Activated CD4-positive, alpha-beta T cell treated with anti-CD3 and anti-CD28 coated beads, Interleukin-2, amount 10 ng/mL, durations not matched to agents 7 days and 5 days (primary cell): ENCODE measurements at regions of chr15 and their contacts with region 1.

Region 1: GRCh38 chr15:40941528-40942336 is 11.5 kb upstream of the CHAC1 start:
- DNase-seq: peak; percentile 73
- H3K4me3 Mint-ChIP-seq: peak overlapping the region; percentile 77
- H3K27ac Mint-ChIP-seq: peak overlapping the region; percentile 41
- H3K4me1 Mint-ChIP-seq: peaks cover 55% of the 10 kb centered on the region
- H3K27me3 Mint-ChIP-seq: no peaks in the 10 kb centered on the region

Region 2: DNA sequence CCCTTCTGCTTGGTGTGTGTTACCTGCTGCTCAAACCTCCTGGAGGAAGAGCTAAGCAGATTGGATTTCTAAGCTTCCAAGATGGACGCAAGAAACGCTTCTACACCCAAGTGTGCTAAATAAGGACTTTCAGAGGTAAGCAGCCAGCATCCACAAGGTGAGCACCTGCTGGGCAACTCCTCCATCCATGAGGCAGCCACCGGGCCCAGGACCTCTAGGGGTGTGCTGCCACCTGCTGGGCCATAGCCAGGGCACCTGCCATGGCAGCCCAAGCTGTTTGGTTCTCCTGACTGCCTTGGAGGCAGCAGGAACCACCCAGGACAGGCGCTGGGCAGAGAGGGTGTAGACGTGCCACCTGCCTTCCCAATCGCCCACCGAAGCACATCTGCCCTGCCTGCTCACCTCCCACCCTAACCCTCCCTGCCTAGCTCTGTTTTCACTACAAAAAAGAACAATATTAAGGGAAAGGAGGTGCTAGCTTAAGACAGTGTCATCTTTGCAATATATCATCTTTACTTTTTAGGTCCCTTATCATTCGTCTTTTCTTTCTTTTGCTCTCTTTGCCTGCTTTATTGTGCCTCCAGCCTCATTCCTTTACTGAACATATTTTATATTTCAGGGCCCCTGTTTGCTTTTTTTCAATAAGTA is 159.0 kb before region 1 on chr15:
- CTCF ChIA-PET with region 1: no interaction called
- POLR2A ChIA-PET with region 1: no interaction called
- DNase-seq: peak; percentile 84
- H3K4me3 Mint-ChIP-seq: no peak overlapping the region
- H3K27ac Mint-ChIP-seq: no peak overlapping the region
- H3K4me1 Mint-ChIP-seq: peaks cover 20% of the 10 kb centered on the region
- H3K27me3 Mint-ChIP-seq: no peaks in the 10 kb centered on the region

Region 3: GRCh38 chr15:40918146-40918798 is 23.5 kb before region 1 on chr15:
- CTCF ChIA-PET with region 1: interaction called, 10 read pairs
- POLR2A ChIA-PET with region 1: no interaction called
- DNase-seq: no peak
- H3K4me3 Mint-ChIP-seq: no peak overlapping the region
- H3K27ac Mint-ChIP-seq: no peak overlapping the region
- H3K4me1 Mint-ChIP-seq: no peaks in the 10 kb centered on the region
- H3K27me3 Mint-ChIP-seq: peaks cover 9% of the 10 kb centered on the region

Region 4: DNA sequence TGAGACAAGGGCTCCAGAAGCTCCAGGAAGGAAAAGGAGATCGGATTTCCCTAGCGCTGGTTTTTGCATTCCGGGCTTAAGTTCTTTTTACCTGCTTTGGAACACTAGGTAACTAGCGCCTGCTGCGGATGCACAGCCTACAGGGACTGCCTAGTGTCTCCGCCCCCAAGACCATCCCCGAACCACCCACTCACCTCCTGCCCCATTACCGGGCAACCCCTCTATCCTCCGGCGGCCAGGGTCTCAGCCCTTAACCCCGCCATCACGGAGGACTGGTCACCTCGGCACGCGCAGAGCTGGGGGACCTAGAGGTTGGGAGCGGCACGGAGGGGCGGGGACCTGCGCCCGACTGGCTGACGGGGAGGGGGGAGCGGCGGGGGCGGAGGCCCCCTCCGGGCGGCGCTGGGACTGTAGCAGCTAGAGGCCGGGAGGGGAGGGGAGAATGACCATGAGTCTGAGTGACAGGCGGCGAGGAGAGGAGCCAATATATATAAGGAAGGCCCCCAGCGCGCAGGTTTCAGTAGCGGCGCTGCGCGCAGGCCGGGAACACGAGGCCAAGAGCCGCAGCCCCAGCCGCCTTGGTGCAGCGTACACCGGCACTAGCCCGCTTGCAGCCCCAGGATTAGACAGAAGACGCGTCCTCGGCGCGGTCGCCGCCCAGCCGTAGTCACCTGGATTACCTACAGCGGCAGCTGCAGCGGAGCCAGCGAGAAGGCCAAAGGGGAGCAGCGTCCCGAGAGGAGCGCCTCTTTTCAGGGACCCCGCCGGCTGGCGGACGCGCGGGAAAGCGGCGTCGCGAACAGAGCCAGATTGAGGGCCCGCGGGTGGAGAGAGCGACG is 12.7 kb before region 1 on chr15 and contains the start of gene DLL4:
- CTCF ChIA-PET with region 1: interaction called, 33 read pairs
- POLR2A ChIA-PET with region 1: no interaction called
- DNase-seq: peak; percentile 51
- H3K4me3 Mint-ChIP-seq: peak within 1 kb of the TSS; percentile 60
- H3K27ac Mint-ChIP-seq: no peak within 1 kb of the TSS
- H3K4me1 Mint-ChIP-seq: peaks cover 46% of the 10 kb centered on the region
- H3K27me3 Mint-ChIP-seq: peaks cover 82% of the 10 kb centered on the region
- total RNA-seq, gene DLL4: not detected

Region 5: DNA sequence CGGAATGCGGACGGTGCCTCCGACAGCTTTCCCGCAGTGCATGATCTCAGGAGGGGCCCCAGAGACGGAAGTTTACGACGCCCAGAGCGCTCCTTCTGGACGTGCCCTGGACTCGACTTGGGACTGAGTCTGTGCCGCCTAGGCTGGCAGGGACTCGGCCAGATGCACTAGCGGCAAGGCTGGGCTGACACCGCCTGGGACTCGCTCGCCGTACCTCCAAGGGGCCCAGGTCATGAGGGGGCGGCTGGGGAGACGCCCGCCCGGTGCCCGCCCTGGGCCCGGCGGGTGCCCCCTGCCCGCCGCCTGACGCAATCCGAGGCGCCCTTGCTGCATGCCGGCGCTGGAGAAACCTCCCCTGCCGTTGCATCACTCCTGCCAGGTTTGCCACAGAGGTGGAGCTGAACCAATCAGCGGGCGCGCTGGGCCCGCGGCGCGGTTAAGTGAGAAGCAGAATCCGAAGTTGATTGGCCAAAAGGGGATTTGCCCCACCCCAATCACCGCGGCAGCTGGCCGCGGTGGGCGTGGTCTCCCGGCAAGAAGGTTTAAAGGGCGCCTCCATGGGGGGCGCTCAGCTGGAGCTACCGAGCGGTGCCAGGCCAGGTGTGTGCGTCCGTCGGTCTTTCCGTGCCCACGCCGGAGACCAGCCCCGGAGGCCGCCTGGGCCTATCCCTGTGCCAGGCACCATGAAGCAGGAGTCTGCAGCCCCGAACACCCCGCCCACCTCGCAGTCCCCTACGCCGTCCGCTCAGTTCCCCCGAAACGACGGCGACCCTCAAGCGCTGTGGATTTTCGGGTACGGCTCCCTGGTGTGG is 11.4 kb after region 1 on chr15 and contains the start of gene CHAC1:
- CTCF ChIA-PET with region 1: interaction called, 59 read pairs
- POLR2A ChIA-PET with region 1: interaction called, 4 read pairs
- DNase-seq: peak; percentile 98
- H3K4me3 Mint-ChIP-seq: peak within 1 kb of the TSS; percentile 94
- H3K27ac Mint-ChIP-seq: peak within 1 kb of the TSS; percentile 94
- H3K4me1 Mint-ChIP-seq: peaks cover 39% of the 10 kb centered on the region
- H3K27me3 Mint-ChIP-seq: no peaks in the 10 kb centered on the region
- total RNA-seq, gene CHAC1: 4.7 to 6.7 TPM